GM23248 (cell line): ENCODE measurements at regions of chr4 and their contacts with region 1.

Region 1: DNA sequence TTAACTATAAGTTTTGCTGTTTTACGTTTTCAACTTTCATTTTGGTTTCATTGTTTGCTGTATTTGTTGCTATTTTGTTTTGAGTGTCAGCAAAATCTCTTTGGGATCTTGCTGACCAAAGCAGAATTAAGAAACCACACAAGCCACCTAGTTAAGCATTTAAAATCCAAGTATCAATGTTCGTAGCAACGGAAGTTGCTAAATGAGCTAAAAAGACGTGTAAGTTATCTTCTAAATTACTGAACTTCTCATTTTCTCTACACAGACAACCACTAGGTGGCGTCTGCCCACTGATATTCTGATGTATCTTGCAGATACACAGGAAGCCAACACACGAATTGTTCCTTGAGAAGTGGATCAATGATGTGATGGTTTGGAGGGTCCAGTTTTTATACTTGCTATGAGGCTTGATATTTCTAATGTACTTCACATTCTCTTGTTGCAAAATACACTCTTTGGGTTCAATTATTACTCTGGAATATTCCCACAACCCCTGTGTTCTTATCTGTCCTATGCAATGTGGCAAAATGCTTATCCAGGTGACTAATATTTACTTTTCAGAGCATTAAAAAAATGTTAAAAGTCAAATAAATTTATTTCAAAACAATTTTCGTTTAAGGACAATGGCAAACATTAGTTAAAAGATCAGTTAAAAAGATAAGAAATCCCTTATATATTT is 250.5 kb downstream of the TECRL start:
- DNase-seq: peak; percentile 65
- H3K4me3 ChIP-seq: peak overlapping the region; percentile 70
- H3K27ac ChIP-seq: no peak overlapping the region
- H3K4me1 ChIP-seq: no peaks in the 10 kb centered on the region
- H3K27me3 ChIP-seq: no peaks in the 10 kb centered on the region

Region 2: DNA sequence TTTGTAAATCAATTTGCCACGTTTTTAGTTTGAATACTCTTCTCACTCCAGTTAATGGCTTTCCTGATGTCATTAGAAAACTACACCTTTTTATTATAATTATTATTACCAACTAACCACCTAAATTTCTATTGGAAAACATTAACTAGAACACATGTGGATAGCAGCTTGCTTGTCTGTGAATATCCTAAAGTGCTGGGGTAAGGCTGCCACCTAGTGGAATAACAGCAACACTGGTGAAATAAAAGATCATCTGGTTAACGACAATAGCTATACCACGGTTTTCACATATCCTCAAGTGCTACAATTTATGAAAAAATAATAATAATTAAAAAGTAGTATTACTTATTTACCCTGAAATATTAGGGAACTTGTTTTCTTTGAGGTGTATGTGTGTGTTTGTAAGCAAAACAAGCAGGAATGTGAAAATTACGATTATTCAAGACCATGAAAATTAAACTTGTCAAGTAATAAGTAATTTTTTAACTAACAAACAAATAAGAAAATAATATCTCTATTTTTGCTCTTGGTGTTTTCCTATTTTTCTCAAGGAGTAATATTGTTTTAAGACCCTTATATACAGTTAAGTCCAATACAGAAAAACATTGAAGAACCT is 380.6 kb after region 1 on chr4:
- in situ Hi-C with region 1: loop called (anchors 10 kb)
- DNase-seq: peak; percentile 64
- H3K4me3 ChIP-seq: no peak overlapping the region
- H3K27ac ChIP-seq: no peak overlapping the region
- H3K4me1 ChIP-seq: no peaks in the 10 kb centered on the region
- H3K27me3 ChIP-seq: no peaks in the 10 kb centered on the region

Region 3: DNA sequence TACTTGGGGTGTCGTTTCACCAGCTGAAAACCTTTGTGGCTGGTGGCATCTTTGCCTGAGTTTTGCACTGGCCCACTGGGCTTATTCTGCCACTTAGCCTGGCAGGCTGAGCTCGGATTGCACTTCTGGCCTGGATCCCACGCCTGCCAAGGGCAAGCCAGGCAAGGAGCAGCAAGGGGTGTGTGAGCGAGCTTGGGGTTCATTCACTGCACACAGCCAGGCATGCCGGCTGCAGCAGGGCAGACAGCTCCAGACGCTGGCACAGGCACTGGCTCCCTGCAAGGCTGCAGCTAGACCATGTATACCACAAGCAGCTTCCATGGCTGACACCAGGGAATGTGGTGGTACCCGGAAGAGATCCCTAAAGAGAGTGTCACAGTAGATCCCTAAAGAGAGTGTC is 1035.2 kb after region 1 on chr4:
- in situ Hi-C with region 1: no loop called
- DNase-seq: no peak
- H3K4me3 ChIP-seq: no peak overlapping the region
- H3K27ac ChIP-seq: no peak overlapping the region
- H3K4me1 ChIP-seq: no peaks in the 10 kb centered on the region
- H3K27me3 ChIP-seq: no peaks in the 10 kb centered on the region